ENCODE measurements at regions of chr12 and their contacts with region 1.

Region 1: DNA sequence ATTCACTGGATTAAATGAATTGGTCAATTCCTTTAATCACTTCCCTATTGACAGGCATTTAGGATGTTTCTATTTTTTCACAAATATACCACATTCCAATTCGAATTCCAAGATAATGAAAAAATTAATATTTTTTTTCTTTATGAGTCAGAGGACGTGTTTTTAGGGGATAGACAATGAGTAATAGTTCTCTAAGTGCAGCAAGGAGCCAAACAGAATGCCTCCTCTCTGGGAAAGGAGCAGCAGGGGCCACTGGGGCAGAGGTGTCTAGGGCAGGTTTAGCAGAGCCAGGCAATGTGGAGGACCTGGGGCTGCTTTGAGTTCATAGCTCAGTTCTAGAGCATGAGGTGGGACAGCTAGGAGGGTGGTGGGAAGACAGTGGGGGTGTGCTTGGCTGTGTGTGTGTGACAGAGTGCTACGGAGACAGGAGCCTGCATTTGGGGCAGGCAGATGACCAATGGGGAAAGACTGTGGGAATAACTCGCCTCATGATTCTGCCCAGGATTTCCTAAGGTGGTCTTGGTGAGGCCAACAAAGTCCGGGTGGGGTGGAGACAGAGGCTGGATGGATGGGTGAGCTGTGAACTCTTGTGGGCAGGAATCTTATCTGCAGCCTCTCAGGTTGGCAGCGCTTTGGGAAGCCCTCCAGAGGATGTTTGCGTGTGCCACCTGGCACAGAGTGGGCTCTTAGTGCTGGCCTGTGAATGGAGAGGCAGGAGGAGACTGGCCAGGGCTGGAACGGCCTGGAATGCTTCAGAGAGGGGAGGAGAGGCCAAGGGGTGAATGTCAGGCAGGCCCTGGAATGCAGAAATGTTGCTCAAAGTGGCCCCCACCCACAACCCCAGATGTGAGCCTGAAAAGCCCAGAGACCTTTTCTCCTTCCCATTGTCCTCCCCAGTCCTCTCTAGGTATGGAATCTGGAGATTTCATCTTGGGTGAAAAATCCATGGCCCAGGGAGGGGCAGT is 2.4 kb upstream of the KRT7 start:
- DNase-seq: peak; percentile 86
- H3K4me3 Mint-ChIP-seq: peak overlapping the region; percentile 91
- H3K27ac Mint-ChIP-seq: peak overlapping the region; percentile 91
- H3K4me1 Mint-ChIP-seq: peaks cover 54% of the 10 kb centered on the region
- H3K27me3 Mint-ChIP-seq: no peaks in the 10 kb centered on the region
- CTCF ChIP-seq: no peak

Region 2: DNA sequence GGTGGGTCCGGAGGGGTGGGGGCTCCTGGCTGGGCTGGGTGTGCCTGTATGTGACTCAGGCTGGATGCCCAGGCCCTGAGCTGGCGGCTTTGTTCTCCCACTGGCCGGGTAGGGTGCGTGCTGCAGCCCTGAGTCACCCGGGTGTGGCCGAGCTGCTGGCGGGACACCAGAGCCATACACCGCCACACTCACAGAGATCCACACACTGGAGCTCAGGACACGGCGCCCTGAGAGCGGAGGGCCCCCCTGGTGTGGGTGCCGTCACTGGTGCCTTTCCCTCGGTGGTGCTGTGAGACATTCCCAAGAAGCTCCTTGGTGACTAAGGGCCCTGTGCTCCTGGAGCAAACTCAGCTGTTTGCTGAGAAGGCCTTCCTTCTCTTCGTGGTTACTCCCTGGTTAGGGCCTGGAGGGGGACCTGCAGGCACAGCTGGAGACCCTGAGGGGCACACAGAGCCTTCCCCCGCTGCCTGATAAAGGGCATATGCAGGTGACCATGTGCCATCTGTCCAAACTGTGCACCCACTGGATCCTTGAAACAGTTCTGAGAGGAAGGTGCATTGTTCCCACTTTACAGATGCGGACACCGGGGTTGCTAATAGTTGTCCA is 83.1 kb before region 1 on chr12:
- CTCF ChIA-PET with region 1: interaction called, 5 read pairs
- POLR2A ChIA-PET with region 1: interaction called, 12 read pairs
- intact Hi-C with region 1: no loop called
- DNase-seq: peak; percentile 98
- H3K4me3 Mint-ChIP-seq: peak overlapping the region; percentile 39
- H3K27ac Mint-ChIP-seq: peak overlapping the region; percentile 97
- H3K4me1 Mint-ChIP-seq: peaks cover 76% of the 10 kb centered on the region
- H3K27me3 Mint-ChIP-seq: no peaks in the 10 kb centered on the region
- CTCF ChIP-seq: no peak

Region 3: DNA sequence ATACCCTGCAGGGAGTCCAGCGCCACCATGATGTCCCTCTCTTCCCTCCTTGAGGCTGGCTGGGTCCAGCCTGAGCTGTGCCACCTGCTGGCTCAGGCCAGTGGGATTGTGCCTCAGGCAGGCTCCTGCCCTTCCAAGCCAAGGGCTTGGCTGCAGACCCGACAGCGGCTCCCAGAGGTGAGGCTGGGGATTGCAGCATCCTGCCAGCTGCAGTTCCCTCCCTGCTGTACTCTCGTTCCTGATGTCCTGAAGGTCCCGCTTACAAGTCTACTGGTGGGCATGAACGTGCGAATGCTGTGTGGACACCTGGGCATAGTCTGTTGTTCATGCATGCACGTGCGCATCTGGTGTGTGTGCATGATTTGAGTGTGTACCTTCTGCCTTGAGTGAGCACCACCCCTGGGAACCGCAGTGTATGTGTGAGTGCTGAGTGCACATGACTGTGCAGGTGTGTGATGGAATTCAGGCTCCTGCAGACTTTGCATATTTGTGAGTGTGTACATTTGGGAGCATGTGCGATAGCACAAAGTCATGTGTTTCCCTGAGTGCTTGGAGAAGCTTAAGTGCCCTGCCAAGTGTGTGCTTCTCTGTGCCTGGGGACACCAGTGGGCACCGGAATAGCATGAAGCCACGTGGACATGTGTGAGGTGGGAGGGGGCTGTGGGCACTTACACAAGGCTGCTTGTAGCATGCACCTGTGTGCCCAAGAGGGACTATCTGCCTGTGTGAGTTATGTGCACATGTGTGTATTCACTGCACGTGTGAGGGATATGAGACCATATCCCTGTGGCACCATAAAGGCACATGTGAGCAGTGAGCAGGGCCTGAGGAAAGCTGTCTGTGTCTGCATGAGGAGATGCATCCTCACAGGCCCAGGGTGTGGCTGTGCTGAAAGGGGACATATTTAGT is 16.8 kb before region 1 on chr12:
- CTCF ChIA-PET with region 1: interaction called, 5 read pairs
- POLR2A ChIA-PET with region 1: interaction called, 9 read pairs
- intact Hi-C with region 1: loop called (anchors 1 kb)
- DNase-seq: peak; percentile 85
- H3K4me3 Mint-ChIP-seq: no peak overlapping the region
- H3K27ac Mint-ChIP-seq: no peak overlapping the region
- H3K4me1 Mint-ChIP-seq: peaks cover 71% of the 10 kb centered on the region
- H3K27me3 Mint-ChIP-seq: no peaks in the 10 kb centered on the region
- CTCF ChIP-seq: peak; percentile 95

Region 4: DNA sequence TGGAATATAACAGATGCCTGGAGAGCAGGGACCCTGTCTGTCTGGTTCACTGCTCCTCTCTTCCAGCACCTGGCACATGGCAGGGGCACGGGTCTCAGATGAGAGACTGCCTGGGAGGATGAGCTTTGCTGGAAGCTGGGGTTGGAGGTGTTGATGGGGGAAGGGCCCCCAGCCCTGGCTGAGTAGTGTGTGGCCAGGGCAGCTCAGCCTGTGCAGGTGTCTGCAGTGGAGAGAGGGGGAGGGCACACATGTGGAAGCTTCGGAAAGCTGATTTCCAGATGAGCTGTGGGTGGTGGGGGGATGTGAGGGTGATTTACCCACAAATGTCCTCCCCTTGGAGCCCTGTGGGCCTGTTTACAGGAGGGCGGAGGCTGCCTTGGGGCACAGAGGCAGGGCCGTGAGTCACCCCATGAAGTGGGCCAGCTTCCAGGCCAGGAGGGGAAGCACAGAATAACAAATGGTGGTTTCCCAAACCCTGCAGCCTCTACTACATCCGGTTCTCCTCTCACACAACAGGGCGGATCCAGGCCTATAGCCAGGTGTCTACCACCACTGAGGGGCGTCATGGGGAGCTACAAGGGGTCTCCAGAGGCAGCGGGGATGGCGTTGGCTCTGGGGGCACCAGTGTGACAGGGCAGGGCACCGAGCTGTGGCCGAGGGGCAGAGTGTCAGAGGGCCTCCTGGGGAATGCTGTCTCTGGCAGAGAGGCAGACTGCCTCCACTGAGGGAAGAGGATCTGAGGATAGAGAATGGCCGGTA is 13.4 kb after region 1 on chr12:
- CTCF ChIA-PET with region 1: interaction called, 13 read pairs
- POLR2A ChIA-PET with region 1: interaction called, 28 read pairs
- intact Hi-C with region 1: no loop called
- DNase-seq: peak; percentile 98
- H3K4me3 Mint-ChIP-seq: peak overlapping the region; percentile 63
- H3K27ac Mint-ChIP-seq: peak overlapping the region; percentile 99
- H3K4me1 Mint-ChIP-seq: peaks cover 66% of the 10 kb centered on the region
- H3K27me3 Mint-ChIP-seq: no peaks in the 10 kb centered on the region
- CTCF ChIP-seq: no peak

Measured in MCF 10A (cell line).